Colonic mucosa (tissue), 4 donors: ENCODE measurements at regions of chr7 and their contacts with region 1.

Region 1: DNA sequence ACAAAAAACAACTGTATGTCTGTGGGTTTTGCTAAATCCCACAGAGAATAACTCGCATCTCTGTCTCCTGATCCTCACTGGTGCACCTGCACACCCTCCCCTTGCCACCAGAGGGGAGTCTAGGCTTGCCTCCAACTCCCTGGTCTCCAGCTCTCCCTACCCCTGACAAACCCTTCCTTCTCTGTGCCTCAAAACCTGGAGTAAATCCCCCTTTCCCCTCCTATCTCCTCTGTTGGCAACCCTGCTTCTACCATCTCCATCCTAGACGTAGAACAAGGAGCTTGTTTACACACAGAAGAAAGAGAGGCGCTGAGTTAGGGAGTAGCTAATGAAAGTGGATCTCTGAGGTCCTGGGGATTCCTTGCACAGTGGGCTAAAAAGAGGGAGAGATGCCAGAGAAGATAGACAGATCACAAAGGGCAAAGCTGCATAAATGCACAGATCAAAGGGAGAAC is 6.0 kb downstream of the MBLAC1 start:
- DNase-seq: peak; percentile 79
- H3K4me3 ChIP-seq: no peak overlapping the region
- H3K27ac ChIP-seq: no peak overlapping the region
- H3K4me1 ChIP-seq: peaks cover 8% of the 10 kb centered on the region
- H3K27me3 ChIP-seq: no peaks in the 10 kb centered on the region
- CTCF ChIP-seq: peak; percentile 91

Region 2: GRCh38 chr7:100219271-100219737 is 86.6 kb after region 1 on chr7:
- intact Hi-C with region 1: loop called (anchors 2 kb)
- DNase-seq: no peak
- H3K4me3 ChIP-seq: no peak overlapping the region
- H3K27ac ChIP-seq: peak overlapping the region; percentile 27
- H3K4me1 ChIP-seq: no peaks in the 10 kb centered on the region
- H3K27me3 ChIP-seq: no peaks in the 10 kb centered on the region
- CTCF ChIP-seq: no peak

Region 3: DNA sequence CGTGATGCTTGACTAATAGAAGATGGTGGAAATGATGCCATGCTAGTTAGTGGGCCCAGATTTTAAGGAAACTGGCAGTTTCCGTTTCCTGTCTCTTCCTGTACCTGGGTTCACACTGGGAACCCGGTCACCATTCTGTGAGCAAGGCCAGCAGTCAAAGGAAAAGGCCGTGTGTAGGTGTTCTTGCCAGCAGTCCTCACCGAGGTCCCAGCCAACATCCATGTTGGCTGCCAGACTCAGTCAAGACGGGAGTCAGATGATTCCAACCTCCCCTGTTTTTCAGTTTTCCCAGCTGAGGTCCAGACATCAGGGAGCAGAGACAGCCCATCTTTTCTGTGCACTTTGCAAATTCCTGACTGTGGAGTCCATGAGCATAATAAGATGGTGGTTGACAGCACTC is 210.0 kb after region 1 on chr7:
- intact Hi-C with region 1: loop called (anchors 10 kb)
- DNase-seq: no peak
- H3K4me3 ChIP-seq: no peak overlapping the region
- H3K27ac ChIP-seq: no peak overlapping the region
- H3K4me1 ChIP-seq: no peaks in the 10 kb centered on the region
- H3K27me3 ChIP-seq: no peaks in the 10 kb centered on the region
- CTCF ChIP-seq: no peak

Region 4: GRCh38 chr7:100563809-100564400 is 431.2 kb after region 1 on chr7:
- intact Hi-C with region 1: no loop called
- DNase-seq: peak; percentile 90
- H3K4me3 ChIP-seq: no peak overlapping the region
- H3K27ac ChIP-seq: no peak overlapping the region
- H3K4me1 ChIP-seq: no peaks in the 10 kb centered on the region
- H3K27me3 ChIP-seq: no peaks in the 10 kb centered on the region
- CTCF ChIP-seq: peak; percentile 95